CD4-positive, alpha-beta T cell (primary cell): ENCODE measurements at regions of chr17 and their contacts with region 1.

Region 1: GRCh38 chr17:7687908-7688807 is at the start of gene WRAP53:
- DNase-seq: peak; percentile 93 to 98 (median 95)
- ATAC-seq: peak; percentile 75
- H3K4me3 ChIP-seq: peak within 1 kb of the TSS; percentile 72
- H3K4me3 Mint-ChIP-seq: peak within 1 kb of the TSS; percentile 99
- H3K27ac ChIP-seq: peak within 1 kb of the TSS; percentile 96 to 98
- H3K27ac Mint-ChIP-seq: peak within 1 kb of the TSS; percentile 100
- H3K4me1 ChIP-seq: peaks cover 38% of the 10 kb centered on the region
- H3K4me1 Mint-ChIP-seq: peaks cover 46% of the 10 kb centered on the region
- H3K27me3 ChIP-seq: no peaks in the 10 kb centered on the region
- H3K27me3 Mint-ChIP-seq: peaks cover 7% of the 10 kb centered on the region
- CTCF ChIP-seq: peak; percentile 100
- total RNA-seq, gene WRAP53: 3.9 to 4.0 TPM

Region 2: DNA sequence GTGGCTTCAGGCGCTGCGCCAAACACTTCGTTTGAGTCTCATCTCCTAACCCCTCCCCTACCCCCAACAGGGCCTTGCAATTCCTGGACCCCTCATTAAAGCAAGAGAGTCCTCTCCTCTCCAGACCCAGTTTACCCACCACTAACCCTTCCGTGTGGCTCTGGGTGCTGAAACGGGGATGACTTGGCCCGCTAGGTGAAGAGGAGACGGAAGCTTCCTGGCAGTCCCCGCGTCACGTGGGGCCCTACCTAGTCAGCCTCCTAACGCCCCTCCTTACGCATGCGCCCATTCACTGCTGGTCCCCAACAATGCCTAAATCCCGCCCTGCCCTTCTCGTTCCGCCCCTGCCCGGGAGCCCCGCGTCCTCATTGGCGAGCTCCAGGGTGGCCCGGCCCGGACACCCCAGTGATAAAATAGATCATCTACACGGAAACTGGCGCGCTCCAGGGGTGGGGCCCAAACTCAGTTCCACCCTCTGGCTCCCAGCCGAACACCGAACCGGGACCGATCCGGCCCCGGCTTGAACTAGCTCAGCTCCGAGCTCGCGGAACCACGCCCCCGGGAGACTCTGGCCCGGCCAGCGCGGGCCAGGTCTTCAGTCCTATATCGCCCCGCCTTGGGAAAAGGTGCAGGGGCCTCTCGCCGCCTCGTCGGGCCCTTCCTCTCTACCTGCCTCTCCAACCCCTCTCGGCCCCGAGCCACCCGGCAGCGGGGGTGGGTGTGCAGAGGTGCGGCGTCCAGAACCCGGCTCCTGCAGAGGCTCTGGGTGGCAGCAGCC is 652.4 kb before region 1 on chr17 and contains the start of gene SLC16A13:
- CTCF ChIA-PET with region 1: no interaction called
- POLR2A ChIA-PET with region 1: interaction called, 8 read pairs
- intact Hi-C with region 1: loop called (anchors 5 to 10 kb)
- DNase-seq: peak; percentile 94 to 100 (median 98)
- ATAC-seq: peak; percentile 90
- H3K4me3 ChIP-seq: peak within 1 kb of the TSS; percentile 99
- H3K4me3 Mint-ChIP-seq: peak within 1 kb of the TSS; percentile 91
- H3K27ac ChIP-seq: peak within 1 kb of the TSS; percentile 84 to 93
- H3K27ac Mint-ChIP-seq: peak within 1 kb of the TSS; percentile 99
- H3K4me1 ChIP-seq: peaks cover 57% of the 10 kb centered on the region
- H3K4me1 Mint-ChIP-seq: peaks cover 63% of the 10 kb centered on the region
- H3K27me3 ChIP-seq: no peaks in the 10 kb centered on the region
- H3K27me3 Mint-ChIP-seq: no peaks in the 10 kb centered on the region
- CTCF ChIP-seq: no peak
- total RNA-seq, gene SLC16A13: 2.3 to 2.4 TPM

Region 3: GRCh38 chr17:7336240-7337175 is 351.6 kb before region 1 on chr17 and contains the start of gene ACAP1:
- CTCF ChIA-PET with region 1: no interaction called
- POLR2A ChIA-PET with region 1: interaction called, 27 read pairs
- intact Hi-C with region 1: no loop called
- DNase-seq: peak; percentile 75 to 95 (median 90)
- ATAC-seq: peak; percentile 96
- H3K4me3 ChIP-seq: peak within 1 kb of the TSS; percentile 91
- H3K4me3 Mint-ChIP-seq: peak within 1 kb of the TSS; percentile 89
- H3K27ac ChIP-seq: peak within 1 kb of the TSS; percentile 55 to 64
- H3K27ac Mint-ChIP-seq: peak within 1 kb of the TSS; percentile 91
- H3K4me1 ChIP-seq: peaks cover 88% of the 10 kb centered on the region
- H3K4me1 Mint-ChIP-seq: peaks cover 52% of the 10 kb centered on the region
- H3K27me3 ChIP-seq: no peaks in the 10 kb centered on the region
- H3K27me3 Mint-ChIP-seq: no peaks in the 10 kb centered on the region
- CTCF ChIP-seq: no peak
- total RNA-seq, gene ACAP1: 565 to 575 TPM

Region 4: GRCh38 chr17:7548585-7549400 is 139.4 kb before region 1 on chr17 and contains the start of gene TNFSF12:
- CTCF ChIA-PET with region 1: no interaction called
- POLR2A ChIA-PET with region 1: interaction called, 19 read pairs
- intact Hi-C with region 1: no loop called
- DNase-seq: peak; percentile 22 to 77 (median 56)
- ATAC-seq: peak; percentile 19
- H3K4me3 ChIP-seq: peak within 1 kb of the TSS; percentile 87
- H3K4me3 Mint-ChIP-seq: peak within 1 kb of the TSS; percentile 91
- H3K27ac ChIP-seq: peak within 1 kb of the TSS; percentile 36 to 60
- H3K27ac Mint-ChIP-seq: peak within 1 kb of the TSS; percentile 88
- H3K4me1 ChIP-seq: peaks cover 62% of the 10 kb centered on the region
- H3K4me1 Mint-ChIP-seq: peaks cover 50% of the 10 kb centered on the region
- H3K27me3 ChIP-seq: no peaks in the 10 kb centered on the region
- H3K27me3 Mint-ChIP-seq: no peaks in the 10 kb centered on the region
- CTCF ChIP-seq: no peak
- total RNA-seq, gene TNFSF12: 17.0 to 19.1 TPM

Region 5: GRCh38 chr17:7627250-7628121 is 60.7 kb before region 1 on chr17 and contains the start of gene SAT2:
- CTCF ChIA-PET with region 1: interaction called, 24 read pairs
- POLR2A ChIA-PET with region 1: interaction called, 119 read pairs
- intact Hi-C with region 1: loop called (anchors 2 to 5 kb)
- DNase-seq: peak; percentile 66 to 93 (median 81)
- ATAC-seq: peak; percentile 84
- H3K4me3 ChIP-seq: peak within 1 kb of the TSS; percentile 95
- H3K4me3 Mint-ChIP-seq: peak within 1 kb of the TSS; percentile 95
- H3K27ac ChIP-seq: peak within 1 kb of the TSS; percentile 67 to 72
- H3K27ac Mint-ChIP-seq: peak within 1 kb of the TSS; percentile 82
- H3K4me1 ChIP-seq: peaks cover 21% of the 10 kb centered on the region
- H3K4me1 Mint-ChIP-seq: peaks cover 20% of the 10 kb centered on the region
- H3K27me3 ChIP-seq: no peaks in the 10 kb centered on the region
- H3K27me3 Mint-ChIP-seq: no peaks in the 10 kb centered on the region
- CTCF ChIP-seq: no peak
- total RNA-seq, gene SAT2: 55.7 to 60.3 TPM

Region 6: GRCh38 chr17:7729816-7730215 is 41.7 kb after region 1 on chr17:
- CTCF ChIA-PET with region 1: no interaction called
- POLR2A ChIA-PET with region 1: no interaction called
- intact Hi-C with region 1: no loop called
- DNase-seq: no peak
- ATAC-seq: no peak
- H3K4me3 ChIP-seq: no peak overlapping the region
- H3K4me3 Mint-ChIP-seq: no peak overlapping the region
- H3K27ac ChIP-seq: no peak overlapping the region
- H3K27ac Mint-ChIP-seq: no peak overlapping the region
- H3K4me1 ChIP-seq: no peaks in the 10 kb centered on the region
- H3K4me1 Mint-ChIP-seq: no peaks in the 10 kb centered on the region
- H3K27me3 ChIP-seq: no peaks in the 10 kb centered on the region
- H3K27me3 Mint-ChIP-seq: peaks cover 8% of the 10 kb centered on the region
- CTCF ChIP-seq: no peak

Region 7: GRCh38 chr17:7782237-7782636 is 94.1 kb after region 1 on chr17:
- CTCF ChIA-PET with region 1: no interaction called
- POLR2A ChIA-PET with region 1: no interaction called
- intact Hi-C with region 1: no loop called
- DNase-seq: no peak
- ATAC-seq: no peak
- H3K4me3 ChIP-seq: no peak overlapping the region
- H3K4me3 Mint-ChIP-seq: no peak overlapping the region
- H3K27ac ChIP-seq: no peak overlapping the region
- H3K27ac Mint-ChIP-seq: no peak overlapping the region
- H3K4me1 ChIP-seq: no peaks in the 10 kb centered on the region
- H3K4me1 Mint-ChIP-seq: no peaks in the 10 kb centered on the region
- H3K27me3 ChIP-seq: peaks cover 0 to 10% of the 10 kb centered on the region in 2 experiments
- H3K27me3 Mint-ChIP-seq: peaks cover 7% of the 10 kb centered on the region
- CTCF ChIP-seq: no peak

Region 8: DNA sequence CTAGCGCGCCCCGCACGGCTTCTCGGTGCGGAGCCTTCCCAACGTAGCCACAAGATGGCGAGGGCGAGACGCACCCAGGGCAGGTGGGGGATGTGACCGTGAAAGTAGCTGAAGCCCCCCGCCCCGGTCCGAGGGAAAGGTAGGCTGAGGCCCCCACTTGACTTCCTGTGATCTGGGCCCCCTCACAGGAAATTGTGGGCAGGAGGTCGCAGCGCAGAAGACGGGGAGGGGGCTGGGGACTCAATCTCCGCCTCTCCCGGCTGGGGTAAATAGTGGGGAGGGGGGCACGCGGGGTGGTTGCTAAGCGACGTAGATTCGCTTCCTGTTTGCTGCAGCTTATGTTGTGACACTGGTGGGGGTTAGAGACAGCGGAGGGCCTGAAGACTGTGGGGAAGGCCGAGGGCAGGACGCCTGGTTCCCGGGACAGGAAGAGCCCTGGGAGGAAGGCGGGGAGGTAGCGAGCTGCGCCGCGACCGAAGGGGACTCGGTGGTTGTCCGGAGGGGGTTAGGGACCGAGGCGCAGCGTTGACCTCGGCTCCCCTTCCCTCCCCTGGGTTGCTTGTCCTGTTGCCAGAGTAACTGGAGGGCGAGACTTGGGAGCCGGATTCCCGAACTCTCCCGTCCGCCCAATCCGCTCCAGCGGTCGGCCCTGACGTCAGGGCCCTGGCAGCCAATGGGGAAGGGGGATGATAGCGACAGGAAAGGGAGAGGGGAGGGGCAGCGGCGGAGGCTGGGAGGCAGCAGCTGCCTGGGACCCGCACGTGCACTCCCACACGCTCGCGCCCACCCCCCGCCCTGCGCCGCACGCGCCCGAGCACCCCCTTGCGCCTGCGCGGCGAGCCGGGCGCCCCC is 147.0 kb after region 1 on chr17:
- CTCF ChIA-PET with region 1: interaction called, 3 read pairs
- POLR2A ChIA-PET with region 1: interaction called, 36 read pairs
- intact Hi-C with region 1: loop called (anchors 5 kb)
- DNase-seq: peak; percentile 74 to 98 (median 86)
- ATAC-seq: peak; percentile 54
- H3K4me3 ChIP-seq: peak overlapping the region; percentile 82
- H3K4me3 Mint-ChIP-seq: peak overlapping the region; percentile 93
- H3K27ac ChIP-seq: peak overlapping the region; percentile 98 to 100
- H3K27ac Mint-ChIP-seq: peak overlapping the region; percentile 98
- H3K4me1 ChIP-seq: peaks cover 62% of the 10 kb centered on the region
- H3K4me1 Mint-ChIP-seq: peaks cover 42% of the 10 kb centered on the region
- H3K27me3 ChIP-seq: no peaks in the 10 kb centered on the region
- H3K27me3 Mint-ChIP-seq: peaks cover 4% of the 10 kb centered on the region
- CTCF ChIP-seq: peak; percentile 84

Region 9: GRCh38 chr17:8248751-8249607 is 560.8 kb after region 1 on chr17 and contains the start of gene PFAS:
- CTCF ChIA-PET with region 1: no interaction called
- POLR2A ChIA-PET with region 1: interaction called, 11 read pairs
- intact Hi-C with region 1: no loop called
- DNase-seq: peak; percentile 87 to 98 (median 94)
- ATAC-seq: peak; percentile 35
- H3K4me3 ChIP-seq: peak within 1 kb of the TSS; percentile 75
- H3K4me3 Mint-ChIP-seq: peak within 1 kb of the TSS; percentile 98
- H3K27ac ChIP-seq: peak within 1 kb of the TSS; percentile 99 to 100
- H3K27ac Mint-ChIP-seq: peak within 1 kb of the TSS; percentile 100
- H3K4me1 ChIP-seq: peaks cover 53% of the 10 kb centered on the region
- H3K4me1 Mint-ChIP-seq: peaks cover 62% of the 10 kb centered on the region
- H3K27me3 ChIP-seq: no peaks in the 10 kb centered on the region
- H3K27me3 Mint-ChIP-seq: peaks cover 5% of the 10 kb centered on the region
- CTCF ChIP-seq: no peak
- total RNA-seq, gene PFAS: 22.3 to 23.0 TPM